Mammary epithelial cell (primary cell): ENCODE measurements at regions of chr13 and their contacts with region 1.

Region 1: DNA sequence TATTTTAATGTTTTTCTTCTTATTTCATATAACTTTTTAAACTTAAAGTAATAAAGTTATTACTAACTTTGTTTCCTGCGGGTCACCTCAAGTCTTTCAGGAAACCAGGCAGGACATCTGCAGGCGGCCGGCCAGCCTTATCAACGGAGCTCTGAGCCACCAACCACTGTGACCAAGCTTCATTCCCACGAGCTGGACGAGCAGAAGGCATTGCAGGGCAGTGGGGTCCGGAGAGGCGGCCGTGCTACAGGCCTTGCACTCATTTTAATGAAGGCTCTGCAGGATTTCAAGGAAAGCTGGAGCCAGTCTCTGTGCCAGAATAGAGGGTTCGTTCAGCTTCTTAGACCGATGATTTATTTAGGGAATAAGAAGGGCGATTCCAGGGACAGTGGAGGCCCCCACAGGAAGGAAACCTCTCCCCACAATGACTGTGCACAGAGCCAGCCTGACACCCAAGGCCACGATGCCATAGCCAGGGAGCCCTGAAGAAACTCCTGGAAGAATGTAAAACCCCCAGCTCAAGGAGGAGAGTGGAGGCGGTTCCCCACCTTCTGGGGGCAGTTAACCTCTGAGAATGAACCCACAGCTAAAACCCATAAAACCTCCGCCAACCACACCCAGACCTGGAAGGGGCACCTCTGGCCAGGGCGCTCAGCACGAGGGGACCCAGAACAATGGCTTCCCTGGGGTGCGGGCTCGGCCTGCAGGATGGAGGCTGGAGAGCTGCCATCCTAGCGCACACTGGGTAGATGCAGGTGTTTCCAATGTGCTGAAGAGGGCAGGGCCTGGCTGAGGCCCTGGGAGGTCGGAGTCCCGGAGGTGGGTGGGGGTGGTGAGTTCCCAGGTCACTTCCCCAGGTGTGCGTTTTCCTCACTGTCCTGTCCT is 75.0 kb downstream of the RASA3 start:
- DNase-seq: no peak
- H3K4me3 ChIP-seq: no peak overlapping the region
- H3K27ac ChIP-seq: no peak overlapping the region
- H3K4me1 ChIP-seq: no peaks in the 10 kb centered on the region
- H3K27me3 ChIP-seq: no peaks in the 10 kb centered on the region
- CTCF ChIP-seq: no peak

Region 2: GRCh38 chr13:113245849-113246791 is 811.3 kb before region 1 on chr13:
- CTCF ChIA-PET with region 1: no interaction called
- dilution Hi-C with region 1: no loop called
- in situ Hi-C with region 1: no loop called
- intact Hi-C with region 1: no loop called
- DNase-seq: no peak
- H3K4me3 ChIP-seq: no peak overlapping the region
- H3K27ac ChIP-seq: no peak overlapping the region
- H3K4me1 ChIP-seq: no peaks in the 10 kb centered on the region
- H3K27me3 ChIP-seq: no peaks in the 10 kb centered on the region
- CTCF ChIP-seq: peak; percentile 27 to 50

Region 3: DNA sequence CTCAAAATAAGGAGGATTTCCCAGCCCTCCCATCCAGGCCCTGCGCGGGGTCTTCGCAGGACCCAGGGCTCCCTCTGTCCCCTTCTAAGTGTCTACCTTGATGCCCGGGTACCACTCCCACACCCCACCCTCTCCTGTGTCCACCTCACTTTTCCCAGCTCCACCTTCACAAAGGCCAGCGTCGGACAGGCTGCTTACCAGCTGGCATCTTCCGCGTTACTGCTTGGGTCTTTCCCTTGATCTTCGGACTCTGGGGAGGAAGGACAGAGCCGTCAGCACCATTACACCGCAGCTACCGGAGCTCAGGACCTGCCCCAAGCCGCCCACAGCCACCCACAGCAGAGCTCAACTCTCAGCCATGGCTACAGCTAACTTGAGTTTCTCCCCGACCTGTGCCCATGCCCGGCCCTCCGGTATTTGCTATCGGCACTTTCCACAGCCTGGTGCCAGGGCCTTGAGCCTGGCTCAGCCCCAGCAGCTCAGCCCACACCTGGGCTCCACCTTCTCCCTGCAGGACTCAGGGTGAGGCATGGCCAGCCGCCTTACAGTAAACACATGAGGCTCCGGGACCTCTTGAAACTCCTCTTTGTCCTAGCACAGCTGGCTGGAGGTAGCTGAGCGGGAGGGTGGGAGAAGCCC is 87.3 kb before region 1 on chr13:
- CTCF ChIA-PET with region 1: no interaction called
- dilution Hi-C with region 1: loop called (anchors 5 kb)
- in situ Hi-C with region 1: no loop called
- intact Hi-C with region 1: no loop called
- DNase-seq: peak; percentile 51
- H3K4me3 ChIP-seq: peak overlapping the region in 1 of 3 experiments; percentile 24
- H3K27ac ChIP-seq: no peak overlapping the region
- H3K4me1 ChIP-seq: peaks cover 21% of the 10 kb centered on the region
- H3K27me3 ChIP-seq: no peaks in the 10 kb centered on the region
- CTCF ChIP-seq: no peak

Region 4: DNA sequence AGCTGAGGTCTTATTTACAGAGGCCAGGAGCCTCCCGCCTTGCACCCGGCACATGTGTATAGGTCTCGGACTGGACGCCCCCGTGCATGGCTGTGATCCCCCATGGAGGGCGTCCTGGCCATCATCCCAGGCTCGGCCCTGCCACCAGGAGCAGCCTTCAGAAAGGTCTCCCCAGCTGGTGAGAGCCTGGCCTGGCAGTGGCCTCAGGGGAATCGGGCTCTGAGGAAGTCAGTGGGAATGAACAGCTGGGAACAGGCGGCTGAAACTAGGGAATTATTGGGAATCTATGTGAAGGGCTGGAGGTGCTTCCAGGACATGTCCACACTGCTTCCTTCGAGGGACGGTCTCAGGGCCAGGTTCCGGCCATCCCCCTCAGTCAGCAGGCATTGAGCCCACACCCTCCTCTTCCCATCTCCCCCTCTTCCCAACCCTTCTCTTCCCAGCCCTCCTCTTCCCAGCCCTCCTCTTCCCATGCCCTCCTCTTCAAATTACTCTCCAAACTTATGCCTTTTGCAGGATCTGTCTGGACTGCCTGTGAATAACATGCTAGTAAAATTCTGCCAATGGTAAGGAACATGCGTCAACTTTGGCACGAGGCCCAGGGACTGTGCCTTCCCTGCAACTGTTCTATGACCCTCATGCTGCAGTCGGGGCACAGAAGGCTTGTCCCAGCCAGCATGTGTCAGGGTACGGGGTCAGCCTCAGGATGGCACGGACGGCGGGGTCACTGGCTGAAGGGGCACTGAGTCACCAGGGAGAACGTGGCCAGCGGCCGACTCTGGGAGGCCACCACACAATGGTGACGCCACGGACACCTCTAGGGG is 59.4 kb before region 1 on chr13:
- CTCF ChIA-PET with region 1: no interaction called
- dilution Hi-C with region 1: loop called (anchors 5 kb)
- in situ Hi-C with region 1: no loop called
- intact Hi-C with region 1: no loop called
- DNase-seq: no peak
- H3K4me3 ChIP-seq: no peak overlapping the region
- H3K27ac ChIP-seq: no peak overlapping the region
- H3K4me1 ChIP-seq: no peaks in the 10 kb centered on the region
- H3K27me3 ChIP-seq: peaks cover 2% of the 10 kb centered on the region
- CTCF ChIP-seq: no peak

Region 5: GRCh38 chr13:114025714-114026431 is 31.5 kb before region 1 on chr13:
- CTCF ChIA-PET with region 1: no interaction called
- dilution Hi-C with region 1: no loop called
- in situ Hi-C with region 1: no loop called
- intact Hi-C with region 1: no loop called
- DNase-seq: no peak
- H3K4me3 ChIP-seq: no peak overlapping the region
- H3K27ac ChIP-seq: no peak overlapping the region
- H3K4me1 ChIP-seq: no peaks in the 10 kb centered on the region
- H3K27me3 ChIP-seq: no peaks in the 10 kb centered on the region
- CTCF ChIP-seq: no peak

Region 6: DNA sequence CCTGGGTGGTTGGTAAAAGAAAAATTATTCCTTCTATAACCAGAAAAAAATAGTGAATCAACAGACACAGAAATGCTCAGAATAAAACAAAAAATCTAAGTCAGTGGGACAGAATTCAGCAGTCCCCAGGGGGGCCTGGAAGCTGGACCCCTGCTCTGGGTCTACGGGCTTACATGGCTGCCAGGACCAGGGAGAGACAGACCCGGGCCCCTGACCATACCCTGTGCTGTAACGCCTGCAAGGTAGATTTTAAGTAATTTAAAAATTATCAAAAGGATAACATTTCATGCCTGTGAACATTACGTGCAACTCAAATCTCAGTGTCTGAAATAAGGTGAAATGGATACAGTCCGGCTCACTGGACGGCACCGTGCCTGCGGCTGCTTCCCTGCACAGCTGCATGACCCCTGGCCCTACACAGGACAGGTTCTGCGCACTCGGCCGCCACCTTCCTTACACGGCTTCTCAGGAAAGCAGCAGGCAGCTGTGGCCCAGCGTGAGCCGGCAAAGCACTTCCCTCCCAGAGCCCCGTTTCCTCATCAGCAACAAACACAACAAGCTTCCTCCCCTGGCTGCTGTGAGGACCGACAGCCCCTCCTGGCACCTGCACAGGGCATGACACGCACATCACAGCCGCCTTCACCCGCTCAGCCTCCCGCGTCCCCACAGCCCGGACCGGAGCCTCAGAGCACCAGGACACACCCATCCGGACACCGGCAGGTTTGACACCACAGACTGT is 52.9 kb after region 1 on chr13:
- CTCF ChIA-PET with region 1: no interaction called
- dilution Hi-C with region 1: loop called (anchors 5 kb)
- in situ Hi-C with region 1: no loop called
- intact Hi-C with region 1: no loop called
- DNase-seq: no peak
- H3K4me3 ChIP-seq: no peak overlapping the region
- H3K27ac ChIP-seq: no peak overlapping the region
- H3K4me1 ChIP-seq: peaks cover 11% of the 10 kb centered on the region
- H3K27me3 ChIP-seq: no peaks in the 10 kb centered on the region
- CTCF ChIP-seq: no peak

Region 7: GRCh38 chr13:114166381-114167131 is 109.1 kb after region 1 on chr13:
- CTCF ChIA-PET with region 1: no interaction called
- dilution Hi-C with region 1: loop called (anchors 5 kb)
- in situ Hi-C with region 1: no loop called
- intact Hi-C with region 1: no loop called
- DNase-seq: no peak
- H3K4me3 ChIP-seq: no peak overlapping the region
- H3K27ac ChIP-seq: no peak overlapping the region
- H3K4me1 ChIP-seq: no peaks in the 10 kb centered on the region
- H3K27me3 ChIP-seq: peaks cover 10% of the 10 kb centered on the region
- CTCF ChIP-seq: no peak